Heart left ventricle (tissue), 16 donors: ENCODE measurements at regions of chr19 and their contacts with region 1.

Region 1: DNA sequence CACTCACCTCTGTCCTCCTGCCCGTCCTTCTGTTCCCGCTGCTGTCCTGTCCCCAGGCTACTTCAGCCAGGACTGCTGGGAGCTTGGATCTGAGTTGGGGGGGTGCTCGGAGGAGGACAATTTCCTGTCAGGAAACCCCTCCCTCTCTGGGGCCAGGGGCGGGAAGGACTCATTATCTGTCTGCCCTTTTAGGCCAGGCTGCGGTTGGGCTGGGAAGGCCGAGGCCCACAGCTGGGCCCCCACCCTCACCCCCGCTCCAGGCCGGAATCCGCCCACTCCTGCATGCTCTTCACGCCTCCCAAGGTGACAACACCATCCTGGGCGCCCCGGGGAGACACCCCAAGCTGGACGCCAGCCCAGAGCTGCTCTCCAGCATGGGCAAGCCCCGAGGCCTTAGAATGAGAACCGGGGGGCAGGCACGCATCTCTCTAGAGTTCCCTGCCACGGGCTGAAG is at the start of gene EXOC3L2:
- DNase-seq: peak; percentile 43 to 71 (median 60)
- ATAC-seq: peak; percentile 33 to 82 (median 64)
- H3K4me3 ChIP-seq: peak within 1 kb of the TSS in 9 of 12 donors; percentile 8 to 50 (median 34)
- H3K27ac ChIP-seq: peak within 1 kb of the TSS in 10 of 12 donors; percentile 9 to 70 (median 57)
- H3K4me1 ChIP-seq: peaks cover 0 to 30% (median 8%) of the 10 kb centered on the region in 12 donors
- H3K27me3 ChIP-seq: no peaks in the 10 kb centered on the region
- CTCF ChIP-seq: no peak
- POLR2A ChIP-seq: no peak
- total RNA-seq, gene EXOC3L2: 0.32 to 2.5 (median 0.85) TPM

Region 2: GRCh38 chr19:45092747-45093678 is 152.3 kb before region 1 on chr19 and contains the start of gene PPP1R37:
- intact Hi-C with region 1: loop called in 2 of 10 experiments (anchors 5 kb)
- DNase-seq: peak; percentile 92 to 97 (median 96)
- ATAC-seq: peak; percentile 86 to 94 (median 88)
- H3K4me3 ChIP-seq: peak within 1 kb of the TSS; percentile 65 to 99 (median 96)
- H3K27ac ChIP-seq: peak within 1 kb of the TSS; percentile 21 to 96 (median 89)
- H3K4me1 ChIP-seq: peaks cover 10 to 66% (median 49%) of the 10 kb centered on the region in 12 donors
- H3K27me3 ChIP-seq: no peaks in the 10 kb centered on the region
- CTCF ChIP-seq: peak in 10 of 12 donors; percentile 10 to 55 (median 34)
- POLR2A ChIP-seq: peak in 1 of 2 donors; percentile 34
- total RNA-seq, gene PPP1R37: 16.0 to 33.7 (median 17.1) TPM

Region 3: DNA sequence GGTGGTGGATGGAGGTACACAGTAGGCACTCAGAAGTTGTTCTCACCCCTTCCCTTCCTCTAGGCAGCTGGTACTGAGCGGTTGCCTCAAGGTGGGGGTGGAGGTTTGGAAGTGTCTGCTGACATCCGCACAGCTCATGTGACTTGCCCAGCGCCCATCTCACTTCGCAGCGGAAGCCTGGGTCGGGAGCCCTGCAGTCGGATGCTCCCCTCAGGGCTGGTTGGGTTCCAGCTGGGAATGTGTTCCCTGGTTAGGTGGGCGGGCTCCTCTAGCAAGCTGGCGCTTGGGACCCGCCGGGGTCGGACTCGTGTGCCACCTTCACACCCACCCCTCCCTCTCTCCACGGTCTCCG is 142.2 kb before region 1 on chr19:
- intact Hi-C with region 1: loop called in 1 of 10 experiments (anchors 10 kb)
- DNase-seq: peak in 2 of 5 donors; percentile 25 to 45
- ATAC-seq: peak in 2 of 4 donors; percentile 17 to 65
- H3K4me3 ChIP-seq: peak overlapping the region in 6 of 12 donors; percentile 9 to 46 (median 32)
- H3K27ac ChIP-seq: peak overlapping the region in 10 of 12 donors; percentile 20 to 74 (median 52)
- H3K4me1 ChIP-seq: peaks cover 3 to 67% (median 49%) of the 10 kb centered on the region in 12 donors
- H3K27me3 ChIP-seq: no peaks in the 10 kb centered on the region
- CTCF ChIP-seq: no peak
- POLR2A ChIP-seq: no peak

Region 4: GRCh38 chr19:45187421-45188100 is 57.8 kb before region 1 on chr19:
- intact Hi-C with region 1: loop called in 1 of 10 experiments (anchors 10 kb)
- DNase-seq: peak in 1 of 5 donors; percentile 35
- ATAC-seq: peak in 2 of 4 donors; percentile 42 to 45
- H3K4me3 ChIP-seq: no peak overlapping the region
- H3K27ac ChIP-seq: no peak overlapping the region
- H3K4me1 ChIP-seq: peaks cover 0 to 16% (median 0%) of the 10 kb centered on the region in 12 donors
- H3K27me3 ChIP-seq: no peaks in the 10 kb centered on the region
- CTCF ChIP-seq: peak; percentile 34 to 63 (median 54)
- POLR2A ChIP-seq: no peak

Region 5: GRCh38 chr19:45200568-45200994 is 44.8 kb before region 1 on chr19:
- intact Hi-C with region 1: loop called in 8 of 10 experiments (anchors 2 to 5 kb)
- DNase-seq: peak in 1 of 5 donors; percentile 23
- ATAC-seq: peak; percentile 51 to 69 (median 62)
- H3K4me3 ChIP-seq: no peak overlapping the region
- H3K27ac ChIP-seq: no peak overlapping the region
- H3K4me1 ChIP-seq: no peaks in the 10 kb centered on the region
- H3K27me3 ChIP-seq: no peaks in the 10 kb centered on the region
- CTCF ChIP-seq: peak; percentile 15 to 57 (median 40)
- POLR2A ChIP-seq: no peak

Region 6: DNA sequence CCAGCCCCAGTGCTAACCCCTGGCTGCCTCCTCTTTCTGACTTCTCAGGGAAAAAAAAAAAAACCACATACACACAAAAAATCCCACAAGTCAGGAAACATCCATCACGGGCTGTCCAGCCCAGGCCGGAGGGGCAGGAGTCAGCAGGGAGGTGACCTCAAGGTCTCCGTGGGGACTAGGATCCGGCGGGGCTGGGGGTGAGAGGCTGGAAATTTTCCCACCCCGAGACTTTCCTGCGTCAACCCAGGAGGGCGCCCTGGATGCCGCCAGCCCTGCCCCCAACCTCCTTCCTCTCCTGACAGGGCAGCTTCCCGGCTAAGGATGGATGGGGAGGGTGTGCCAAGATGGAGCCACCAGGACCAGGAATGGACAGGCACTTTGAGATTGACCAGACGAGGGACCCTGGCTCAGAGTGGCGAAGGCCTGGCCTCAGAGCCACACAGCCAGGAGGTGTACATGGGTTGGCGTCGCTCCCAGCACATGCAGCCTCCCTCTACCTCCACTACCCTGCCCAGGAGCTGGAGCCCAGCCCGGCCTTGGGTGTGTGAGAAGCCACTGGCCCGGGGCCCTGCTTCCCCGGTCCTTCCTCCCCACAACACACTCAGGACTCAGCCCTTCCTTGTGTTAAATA is 33.5 kb before region 1 on chr19:
- intact Hi-C with region 1: loop called in 1 of 10 experiments (anchors 5 kb)
- DNase-seq: peak; percentile 53 to 80 (median 64)
- ATAC-seq: peak; percentile 82 to 92 (median 86)
- H3K4me3 ChIP-seq: no peak overlapping the region
- H3K27ac ChIP-seq: peak overlapping the region; percentile 25 to 76 (median 54)
- H3K4me1 ChIP-seq: peaks cover 0 to 34% (median 12%) of the 10 kb centered on the region in 12 donors
- H3K27me3 ChIP-seq: peaks cover 0 to 27% (median 7%) of the 10 kb centered on the region in 9 donors
- CTCF ChIP-seq: no peak
- POLR2A ChIP-seq: no peak

Region 7: DNA sequence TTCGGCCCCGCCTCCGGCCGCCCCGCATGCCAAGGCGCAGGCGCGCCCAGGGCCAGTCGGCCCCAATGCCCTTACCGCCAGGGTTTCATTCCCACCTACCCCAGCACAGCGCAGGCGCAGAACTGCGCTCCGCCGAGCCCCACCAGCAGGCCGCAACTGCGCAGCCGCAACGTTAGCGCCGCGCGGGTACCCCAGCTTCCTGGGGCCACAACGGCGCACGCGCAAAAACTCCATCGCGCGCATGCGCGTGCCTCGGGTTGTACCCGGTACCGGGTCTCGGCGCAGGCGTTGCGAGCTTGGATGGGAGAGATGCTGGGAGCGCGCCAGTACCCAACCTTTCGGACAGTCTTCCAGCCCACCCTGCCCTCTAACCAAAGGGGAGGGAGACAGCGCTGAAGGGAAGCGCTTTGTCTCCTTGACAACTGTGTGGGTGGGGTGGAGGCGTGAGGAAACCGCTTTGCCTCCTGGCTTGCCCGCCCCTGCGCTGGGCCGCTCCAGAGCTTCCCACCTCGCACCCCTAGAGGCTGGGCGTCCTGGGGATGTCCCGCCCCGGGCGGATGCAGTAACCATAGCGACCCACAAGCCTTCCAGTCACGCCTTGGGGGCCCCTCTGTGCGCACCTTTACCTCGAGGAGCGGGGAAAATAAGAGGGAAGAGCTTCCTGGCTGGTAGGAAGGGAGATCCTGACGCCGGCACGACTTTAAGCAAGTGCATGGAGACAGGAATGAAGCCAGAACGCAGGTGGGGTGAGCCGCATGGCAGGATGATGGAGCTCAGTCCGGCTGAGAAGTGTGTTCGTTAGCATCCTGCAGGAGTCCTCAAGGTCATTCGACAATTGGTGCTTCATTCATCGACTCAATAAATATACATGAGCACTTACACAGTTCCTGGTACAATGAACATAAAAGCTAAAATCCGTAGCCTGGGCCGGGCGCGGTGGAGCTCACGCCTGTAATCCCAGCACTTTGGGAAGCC is 657.6 kb after region 1 on chr19:
- intact Hi-C with region 1: no loop called
- DNase-seq: peak; percentile 98 to 100 (median 99)
- ATAC-seq: peak; percentile 95 to 97 (median 96)
- H3K4me3 ChIP-seq: peak overlapping the region; percentile 52 to 84 (median 77)
- H3K27ac ChIP-seq: peak overlapping the region; percentile 63 to 88 (median 79)
- H3K4me1 ChIP-seq: peaks cover 3 to 26% (median 16%) of the 10 kb centered on the region in 12 donors
- H3K27me3 ChIP-seq: no peaks in the 10 kb centered on the region
- CTCF ChIP-seq: peak in 1 of 12 donors; percentile 9
- POLR2A ChIP-seq: peak in 1 of 2 donors; percentile 78